Activated B cell treated with CpG ODN at 0.5 μM for 24 hours (primary cell): ENCODE measurements at regions of chr21 and their contacts with region 1.

Region 1: GRCh38 chr21:42009831-42010523 is at the start of gene ZBTB21:
- DNase-seq: peak; percentile 97
- ATAC-seq: peak; percentile 79
- H3K4me3 Mint-ChIP-seq: peak within 1 kb of the TSS; percentile 98
- H3K27ac Mint-ChIP-seq: peak within 1 kb of the TSS; percentile 100
- H3K4me1 Mint-ChIP-seq: peaks cover 36% of the 10 kb centered on the region
- H3K27me3 Mint-ChIP-seq: no peaks in the 10 kb centered on the region
- CTCF ChIP-seq: no peak
- total RNA-seq, gene ZBTB21: 24.2 and 25.4 TPM in 2 replicates

Region 2: GRCh38 chr21:41879190-41879998 is 130.6 kb before region 1 on chr21 and contains the start of gene PRDM15:
- CTCF ChIA-PET with region 1: no interaction called
- POLR2A ChIA-PET with region 1: interaction called, 9 read pairs
- intact Hi-C with region 1: loop called (anchors 1 kb)
- DNase-seq: peak; percentile 83
- ATAC-seq: peak; percentile 63
- H3K4me3 Mint-ChIP-seq: peak within 1 kb of the TSS; percentile 90
- H3K27ac Mint-ChIP-seq: peak within 1 kb of the TSS; percentile 93
- H3K4me1 Mint-ChIP-seq: peaks cover 39% of the 10 kb centered on the region
- H3K27me3 Mint-ChIP-seq: no peaks in the 10 kb centered on the region
- CTCF ChIP-seq: no peak
- total RNA-seq, gene PRDM15: 12.8 and 13.6 TPM in 2 replicates

Region 3: GRCh38 chr21:41953831-41954653 is 55.9 kb before region 1 on chr21 and contains the start of gene C2CD2:
- CTCF ChIA-PET with region 1: no interaction called
- POLR2A ChIA-PET with region 1: interaction called, 4 read pairs
- intact Hi-C with region 1: loop called (anchors 10 kb)
- DNase-seq: no peak
- ATAC-seq: peak; percentile 47
- H3K4me3 Mint-ChIP-seq: peak within 1 kb of the TSS; percentile 62
- H3K27ac Mint-ChIP-seq: no peak within 1 kb of the TSS
- H3K4me1 Mint-ChIP-seq: peaks cover 21% of the 10 kb centered on the region
- H3K27me3 Mint-ChIP-seq: peaks cover 17% of the 10 kb centered on the region
- CTCF ChIP-seq: no peak
- total RNA-seq, gene C2CD2: 6.7 TPM in 2 replicates

Region 4: DNA sequence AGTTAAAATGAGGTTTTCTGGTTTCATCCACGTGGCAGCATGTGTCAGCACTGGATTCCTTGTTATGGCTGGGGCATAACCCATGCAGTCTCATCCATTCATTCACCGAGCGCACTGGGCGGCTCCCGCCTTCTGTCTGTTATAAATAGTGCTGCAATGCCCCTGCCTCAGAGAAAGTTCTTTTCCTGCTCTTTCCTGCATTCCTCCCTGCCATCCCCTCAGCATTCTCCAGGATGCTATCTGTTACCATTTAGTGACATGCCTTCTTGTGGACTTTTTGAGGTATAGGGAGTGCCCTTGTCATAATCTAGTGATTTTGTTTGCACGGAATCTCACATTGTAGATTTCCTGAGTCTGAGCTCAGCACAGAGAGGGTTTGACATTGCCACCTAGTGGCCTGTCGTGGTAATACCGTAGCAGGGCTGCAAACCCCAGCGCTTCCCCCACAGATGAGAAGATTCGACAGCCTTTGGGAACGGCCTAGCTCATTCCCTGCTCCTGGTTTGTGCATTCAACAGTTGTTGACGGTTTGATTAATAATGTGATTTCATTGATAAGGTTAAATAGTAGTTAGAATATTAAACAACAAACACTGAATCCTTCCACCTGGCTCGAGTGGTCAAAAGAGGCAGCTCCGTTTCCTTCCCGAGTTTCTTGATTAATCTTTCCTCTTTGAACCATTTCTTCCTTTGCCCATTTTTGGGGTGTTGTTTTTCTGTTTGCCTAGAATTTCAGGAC is 107.4 kb after region 1 on chr21:
- CTCF ChIA-PET with region 1: interaction called, 16 read pairs
- POLR2A ChIA-PET with region 1: interaction called, 12 read pairs
- intact Hi-C with region 1: loop called (anchors 1 kb)
- DNase-seq: peak; percentile 61
- ATAC-seq: peak; percentile 85
- H3K4me3 Mint-ChIP-seq: peak overlapping the region; percentile 37
- H3K27ac Mint-ChIP-seq: no peak overlapping the region
- H3K4me1 Mint-ChIP-seq: peaks cover 48% of the 10 kb centered on the region
- H3K27me3 Mint-ChIP-seq: peaks cover 16% of the 10 kb centered on the region
- CTCF ChIP-seq: peak; percentile 70